Mammary epithelial cell (primary cell): ENCODE measurements at regions of chr14 and their contacts with region 1.

Region 1: GRCh38 chr14:59189786-59190771 is 1.6 kb downstream of the DAAM1 start:
- DNase-seq: peak; percentile 89
- H3K4me3 ChIP-seq: peak overlapping the region; percentile 74 to 91 (median 82)
- H3K27ac ChIP-seq: peak overlapping the region; percentile 94
- H3K4me1 ChIP-seq: peaks cover 24% of the 10 kb centered on the region
- H3K27me3 ChIP-seq: no peaks in the 10 kb centered on the region
- CTCF ChIP-seq: peak in 1 of 2 donors; percentile 26

Region 2: DNA sequence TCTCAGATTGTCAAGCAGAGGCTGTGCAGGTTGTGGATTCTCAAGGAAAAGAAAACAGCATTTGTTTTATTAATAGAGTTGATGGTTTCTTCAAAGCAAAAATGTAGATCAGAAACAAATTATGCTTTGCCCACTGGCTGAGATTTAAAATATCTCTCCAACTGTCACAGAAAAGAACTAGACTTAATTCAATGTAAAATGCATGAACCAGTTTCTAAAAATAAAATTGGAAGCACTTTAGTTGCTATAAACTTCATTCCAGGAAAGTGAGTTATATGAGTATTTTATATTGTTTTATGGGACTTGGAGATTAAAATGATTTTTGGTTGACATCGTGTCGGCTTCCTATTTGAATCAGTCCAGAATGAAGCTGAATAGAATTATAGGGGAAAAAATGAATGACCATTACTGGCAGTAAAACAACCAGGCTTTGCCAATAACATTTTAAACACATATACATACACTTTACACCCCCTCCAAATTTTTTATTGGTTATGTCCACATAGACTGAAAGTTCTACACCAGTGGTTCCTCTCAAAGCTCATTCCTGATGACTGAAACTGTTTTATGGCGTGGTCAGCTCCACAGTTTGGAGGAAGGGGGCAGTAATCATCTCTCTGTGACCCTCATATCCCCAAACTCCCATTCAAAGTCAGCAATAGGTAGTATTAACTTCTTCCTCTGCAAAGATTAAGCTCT is 57.1 kb before region 1 on chr14:
- CTCF ChIA-PET with region 1: interaction called, 15 read pairs
- dilution Hi-C with region 1: no loop called
- in situ Hi-C with region 1: loop called in 1 of 2 experiments (anchors 10 kb)
- intact Hi-C with region 1: no loop called
- DNase-seq: no peak
- H3K4me3 ChIP-seq: no peak overlapping the region
- H3K27ac ChIP-seq: no peak overlapping the region
- H3K4me1 ChIP-seq: no peaks in the 10 kb centered on the region
- H3K27me3 ChIP-seq: no peaks in the 10 kb centered on the region
- CTCF ChIP-seq: peak in 1 of 2 donors; percentile 4

Region 3: GRCh38 chr14:59245809-59246295 is 55.8 kb after region 1 on chr14:
- CTCF ChIA-PET with region 1: no interaction called
- dilution Hi-C with region 1: no loop called
- in situ Hi-C with region 1: no loop called
- intact Hi-C with region 1: loop called (anchors 5 kb)
- DNase-seq: peak; percentile 43
- H3K4me3 ChIP-seq: no peak overlapping the region
- H3K27ac ChIP-seq: peak overlapping the region; percentile 66
- H3K4me1 ChIP-seq: peaks cover 25% of the 10 kb centered on the region
- H3K27me3 ChIP-seq: no peaks in the 10 kb centered on the region
- CTCF ChIP-seq: no peak

Region 4: DNA sequence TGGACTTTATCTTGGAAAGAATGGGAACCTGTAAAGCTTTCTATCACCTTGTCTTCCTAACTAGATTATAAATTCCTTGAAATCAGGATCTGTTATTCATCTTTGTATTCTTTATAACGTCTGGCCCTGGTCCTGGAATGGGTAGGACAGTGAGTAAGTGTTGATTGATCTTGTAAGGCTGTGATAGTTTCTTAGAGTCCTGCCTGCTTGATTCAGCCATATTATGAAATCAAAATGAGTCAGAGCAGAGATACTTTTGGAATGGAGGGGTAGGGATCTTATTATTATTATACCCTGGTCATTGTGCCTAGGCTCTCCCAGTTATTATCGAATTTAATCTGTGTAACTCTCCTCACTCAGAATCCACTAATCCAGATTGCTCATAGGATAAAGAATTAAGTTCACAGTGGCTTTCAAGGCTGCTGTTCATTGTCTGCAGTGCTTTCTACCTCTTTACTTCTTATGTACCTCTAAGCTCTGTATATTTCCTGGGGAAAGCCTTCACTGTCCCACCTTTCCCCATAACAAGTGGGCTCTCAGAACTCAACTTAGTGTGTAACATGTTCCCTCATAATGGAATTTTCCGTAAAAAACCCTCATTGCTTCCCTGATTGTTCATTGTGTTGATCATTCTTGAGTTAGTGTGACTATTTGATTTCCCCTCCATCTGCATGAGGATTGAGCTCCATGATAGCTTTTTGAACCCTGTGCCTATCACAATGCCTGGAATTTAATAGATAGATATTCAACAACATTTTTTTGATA is 91.7 kb after region 1 on chr14:
- CTCF ChIA-PET with region 1: no interaction called
- dilution Hi-C with region 1: no loop called
- in situ Hi-C with region 1: no loop called
- intact Hi-C with region 1: loop called (anchors 2 kb)
- DNase-seq: peak; percentile 83
- H3K4me3 ChIP-seq: no peak overlapping the region
- H3K27ac ChIP-seq: peak overlapping the region; percentile 95
- H3K4me1 ChIP-seq: peaks cover 56% of the 10 kb centered on the region
- H3K27me3 ChIP-seq: no peaks in the 10 kb centered on the region
- CTCF ChIP-seq: no peak

Region 5: DNA sequence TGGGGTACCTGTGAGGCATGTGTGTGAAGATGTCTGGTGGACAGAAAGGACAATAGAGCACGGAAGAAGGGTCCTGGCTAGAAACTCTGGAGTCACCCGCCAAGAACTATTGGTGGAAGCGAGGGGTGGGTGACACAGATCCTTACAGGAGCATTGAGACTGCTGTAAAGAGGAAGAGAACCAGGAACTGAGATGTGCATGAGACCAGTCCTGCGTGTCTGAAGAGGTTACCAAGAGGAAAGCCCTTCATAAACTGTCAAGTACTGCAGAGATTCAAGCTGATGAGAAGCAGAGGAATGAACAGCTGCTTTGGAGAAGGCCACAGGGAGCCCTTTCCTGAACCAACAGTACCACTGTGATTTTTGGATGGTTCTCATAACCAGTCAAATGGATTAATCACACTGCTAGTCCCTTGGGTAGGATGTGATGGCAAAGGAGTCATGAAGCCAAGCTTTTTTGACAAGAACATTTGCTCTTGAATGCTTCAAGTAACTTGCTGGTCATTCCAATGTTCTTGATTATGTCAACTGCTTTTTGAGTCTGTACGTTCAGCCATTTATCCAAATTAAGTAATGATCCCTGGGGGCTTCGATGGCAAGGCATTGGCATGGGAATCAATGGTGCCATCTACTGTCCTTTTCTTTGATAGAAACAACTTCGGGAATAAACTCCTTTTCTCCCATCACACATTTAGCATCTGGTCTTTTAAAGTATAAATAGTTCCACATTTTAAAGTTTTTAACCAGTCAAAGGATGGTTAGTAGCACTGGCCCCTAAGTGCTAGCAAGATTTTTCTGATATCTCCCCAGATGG is 232.2 kb after region 1 on chr14:
- CTCF ChIA-PET with region 1: no interaction called
- dilution Hi-C with region 1: no loop called
- in situ Hi-C with region 1: no loop called
- intact Hi-C with region 1: loop called (anchors 2 kb)
- DNase-seq: no peak
- H3K4me3 ChIP-seq: no peak overlapping the region
- H3K27ac ChIP-seq: no peak overlapping the region
- H3K4me1 ChIP-seq: no peaks in the 10 kb centered on the region
- H3K27me3 ChIP-seq: no peaks in the 10 kb centered on the region
- CTCF ChIP-seq: peak; percentile 25 to 43